ENCODE measurements at regions of chr9 and their contacts with region 1.

Region 1: DNA sequence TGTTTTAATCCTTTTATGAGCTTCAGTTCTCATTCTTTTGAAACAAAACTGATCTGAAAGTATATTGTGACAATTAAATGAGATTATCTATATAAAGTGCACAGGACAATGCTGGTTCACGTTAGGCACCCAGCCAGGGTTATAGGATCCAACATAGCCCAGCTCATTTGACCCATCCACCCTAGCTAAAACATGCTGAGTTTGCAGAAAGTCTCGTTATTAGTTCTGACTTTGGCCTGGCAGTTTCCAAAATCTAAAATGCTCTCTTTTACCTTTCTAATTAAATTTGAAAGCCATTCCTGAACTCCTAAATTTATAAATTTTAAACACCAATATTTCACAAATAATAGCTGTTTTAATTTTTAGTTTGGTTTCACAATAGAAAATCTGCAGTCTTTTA is 131.9 kb upstream of the PTPRD start:
- DNase-seq: no peak
- H3K4me3 ChIP-seq: no peak overlapping the region
- H3K27ac ChIP-seq: no peak overlapping the region
- H3K4me1 ChIP-seq: no peaks in the 10 kb centered on the region
- H3K27me3 ChIP-seq: no peaks in the 10 kb centered on the region
- CTCF ChIP-seq: no peak

Region 2: DNA sequence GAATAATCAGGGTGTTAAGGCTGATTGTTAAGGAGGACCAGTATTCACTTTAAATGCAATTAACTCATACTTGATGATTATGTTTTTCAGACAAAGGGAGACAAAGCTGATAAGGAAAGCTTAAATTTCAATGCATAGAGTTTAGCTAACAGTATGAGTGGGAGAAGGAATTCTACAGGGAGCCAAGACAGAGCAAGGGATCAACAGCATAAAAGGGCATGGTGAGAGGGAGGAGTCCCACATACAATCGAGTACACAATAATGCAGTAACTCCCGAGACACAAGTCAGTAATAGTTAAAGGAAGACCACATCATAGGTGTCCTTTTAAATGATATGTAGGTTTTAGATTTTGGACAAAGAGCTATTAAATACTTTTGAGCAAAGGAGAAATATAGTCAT is 59.8 kb after region 1 on chr9:
- intact Hi-C with region 1: loop called (anchors 5 kb)
- DNase-seq: no peak
- H3K4me3 ChIP-seq: no peak overlapping the region
- H3K27ac ChIP-seq: no peak overlapping the region
- H3K4me1 ChIP-seq: no peaks in the 10 kb centered on the region
- H3K27me3 ChIP-seq: no peaks in the 10 kb centered on the region
- CTCF ChIP-seq: no peak

Measured in left ventricle myocardium inferior (tissue), 1 donor.